ENCODE measurements at regions of chr13 and their contacts with region 1.

Region 1: GRCh38 chr13:100235311-100235901 is 146.5 kb downstream of the PCCA start:
- DNase-seq: no peak
- H3K4me3 ChIP-seq: no peak overlapping the region
- H3K27ac ChIP-seq: peak overlapping the region in 2 of 8 donors; percentile 8 to 26
- H3K4me1 ChIP-seq: peaks cover 0 to 30% (median 21%) of the 10 kb centered on the region in 6 donors
- H3K27me3 ChIP-seq: no peaks in the 10 kb centered on the region
- CTCF ChIP-seq: peak; percentile 14 to 69 (median 54)
- POLR2A ChIP-seq: no peak

Region 2: GRCh38 chr13:99656092-99656745 is 579.2 kb before region 1 on chr13:
- intact Hi-C with region 1: loop called (anchors 2 kb)
- DNase-seq: peak; percentile 83
- H3K4me3 ChIP-seq: no peak overlapping the region
- H3K27ac ChIP-seq: peak overlapping the region in 1 of 8 donors; percentile 14
- H3K4me1 ChIP-seq: peaks cover 5 to 45% (median 30%) of the 10 kb centered on the region in 6 donors
- H3K27me3 ChIP-seq: peaks cover 0 to 14% (median 0%) of the 10 kb centered on the region in 7 donors
- CTCF ChIP-seq: peak; percentile 69 to 93 (median 87)
- POLR2A ChIP-seq: no peak

Region 3: GRCh38 chr13:99916366-99917103 is 318.9 kb before region 1 on chr13:
- intact Hi-C with region 1: loop called (anchors 5 kb)
- DNase-seq: no peak
- H3K4me3 ChIP-seq: no peak overlapping the region
- H3K27ac ChIP-seq: no peak overlapping the region
- H3K4me1 ChIP-seq: no peaks in the 10 kb centered on the region
- H3K27me3 ChIP-seq: peaks cover 0 to 41% (median 3%) of the 10 kb centered on the region in 7 donors
- CTCF ChIP-seq: peak; percentile 66 to 95 (median 81)
- POLR2A ChIP-seq: no peak

Region 4: GRCh38 chr13:100514788-100515409 is 279.5 kb after region 1 on chr13:
- intact Hi-C with region 1: loop called (anchors 10 kb)
- DNase-seq: peak; percentile 91
- H3K4me3 ChIP-seq: no peak overlapping the region
- H3K27ac ChIP-seq: no peak overlapping the region
- H3K4me1 ChIP-seq: peaks cover 0 to 25% (median 13%) of the 10 kb centered on the region in 6 donors
- H3K27me3 ChIP-seq: no peaks in the 10 kb centered on the region
- CTCF ChIP-seq: peak; percentile 70 to 95 (median 87)
- POLR2A ChIP-seq: no peak